Mammary epithelial cell (primary cell): ENCODE measurements at regions of chr4 and their contacts with region 1.

Region 1: DNA sequence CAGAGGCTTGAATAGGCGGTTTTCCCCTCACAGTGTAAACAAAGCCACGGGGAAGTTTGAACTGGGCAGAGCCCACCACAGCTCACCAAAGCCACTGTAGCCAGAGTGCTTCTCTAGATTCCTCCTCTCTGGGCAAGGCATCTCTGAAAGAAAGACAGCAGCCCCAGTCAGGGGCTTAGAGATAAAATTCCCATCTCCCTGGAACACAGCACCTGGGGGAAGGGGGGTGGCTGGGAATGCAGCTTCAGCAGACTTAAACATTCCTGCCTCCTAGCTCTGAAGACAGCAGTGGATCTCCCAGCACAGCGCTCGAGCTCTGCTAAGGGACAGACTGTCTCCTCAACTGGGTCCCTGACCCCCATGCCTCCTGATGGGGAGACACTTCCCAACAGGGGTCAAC is 44.0 kb upstream of the USP38 start:
- DNase-seq: no peak
- H3K4me3 ChIP-seq: no peak overlapping the region
- H3K27ac ChIP-seq: no peak overlapping the region
- H3K4me1 ChIP-seq: no peaks in the 10 kb centered on the region
- H3K27me3 ChIP-seq: peaks cover 2% of the 10 kb centered on the region
- CTCF ChIP-seq: no peak

Region 2: GRCh38 chr4:143054971-143055370 is 85.7 kb before region 1 on chr4:
- CTCF ChIA-PET with region 1: interaction called, 15 read pairs
- dilution Hi-C with region 1: no loop called
- in situ Hi-C with region 1: no loop called
- intact Hi-C with region 1: no loop called
- DNase-seq: no peak
- H3K4me3 ChIP-seq: no peak overlapping the region
- H3K27ac ChIP-seq: no peak overlapping the region
- H3K4me1 ChIP-seq: no peaks in the 10 kb centered on the region
- H3K27me3 ChIP-seq: no peaks in the 10 kb centered on the region
- CTCF ChIP-seq: no peak